Posterior vena cava (tissue), 2 donors: ENCODE measurements at regions of chrX and their contacts with region 1.

Region 1: DNA sequence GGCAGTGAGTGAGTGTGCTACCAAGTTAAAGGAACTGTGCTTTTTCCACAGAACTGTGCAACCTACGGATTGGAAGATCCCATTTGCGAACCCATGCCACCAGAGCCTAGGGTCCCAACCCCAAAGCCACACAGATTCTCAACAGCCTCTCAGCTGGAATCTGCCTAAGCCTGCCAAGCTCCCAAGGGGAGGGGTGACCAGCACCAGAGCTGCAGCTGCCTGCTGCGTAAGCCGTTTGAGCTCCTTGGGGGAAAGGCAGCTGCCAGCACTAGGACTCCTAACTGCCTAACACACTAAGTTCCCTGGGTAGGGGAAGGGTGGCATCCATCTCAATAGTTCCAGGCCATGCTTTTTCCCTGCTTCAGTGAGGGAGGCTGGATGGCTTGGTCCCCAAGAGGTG is 738.1 kb upstream of the PRKX start:
- DNase-seq: no peak

Region 2: GRCh38 chrX:3006495-3006894 is 1445.1 kb before region 1 on chrX and contains the start of gene ARSH:
- intact Hi-C with region 1: loop called in 1 of 2 experiments (anchors 5 kb)
- DNase-seq: no peak
- total RNA-seq, gene ARSH: not detected

Region 3: GRCh38 chrX:4638036-4638435 is 186.4 kb after region 1 on chrX:
- intact Hi-C with region 1: no loop called
- DNase-seq: no peak